Heart right ventricle (tissue), 16 donors: ENCODE measurements at regions of chr21 and their contacts with region 1.

Region 1: DNA sequence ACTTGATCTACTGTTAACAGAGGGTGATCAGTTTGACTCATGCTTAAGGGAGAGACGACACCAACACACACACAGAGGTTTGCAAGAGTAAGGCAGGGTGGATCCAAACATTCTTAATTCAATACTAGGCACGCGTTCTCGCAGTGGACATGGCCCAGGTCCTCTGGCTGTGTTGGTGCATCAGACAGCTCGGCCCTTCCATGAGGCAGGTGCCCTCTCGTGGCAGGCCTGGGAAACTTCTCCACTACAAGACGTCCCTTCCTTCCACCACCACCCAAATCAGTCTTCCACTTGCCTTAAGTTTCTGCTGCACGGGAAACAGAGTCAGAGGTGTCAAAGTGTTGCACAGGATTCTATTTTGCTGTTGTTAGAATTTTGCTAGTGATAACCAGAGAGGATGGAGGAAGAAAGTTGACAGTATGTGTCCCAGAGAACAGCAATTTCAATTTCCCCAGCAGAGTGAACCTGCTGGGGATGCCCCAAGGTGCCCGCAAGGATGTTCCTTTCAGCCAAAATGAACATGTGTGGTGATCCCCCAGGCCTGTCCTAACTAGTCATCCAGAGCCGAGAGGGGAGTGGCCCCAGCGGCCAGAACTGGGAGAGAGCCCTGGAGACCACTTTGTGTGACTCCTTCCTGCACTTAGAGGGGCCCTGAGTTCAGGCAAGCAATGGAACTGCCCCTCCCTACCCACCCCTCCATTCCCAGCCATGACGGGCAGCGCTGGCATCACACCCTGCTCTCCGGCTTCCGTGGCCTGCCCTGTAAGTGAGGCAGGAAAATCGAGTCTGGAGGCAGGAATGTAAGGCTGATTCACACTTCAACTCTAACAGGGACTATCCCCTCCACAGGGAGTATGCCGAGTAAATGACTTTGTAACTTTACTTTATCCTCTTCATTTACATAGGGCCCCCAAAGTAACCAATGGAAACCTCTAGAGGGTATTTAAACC is 34.8 kb downstream of the MX1 start:
- DNase-seq: peak; percentile 71 to 72
- ATAC-seq: peak; percentile 81 to 93 (median 88)
- H3K4me3 ChIP-seq: no peak overlapping the region
- H3K27ac ChIP-seq: no peak overlapping the region
- H3K4me1 ChIP-seq: no peaks in the 10 kb centered on the region
- H3K27me3 ChIP-seq: no peaks in the 10 kb centered on the region
- CTCF ChIP-seq: peak; percentile 62 to 85 (median 80)

Region 2: DNA sequence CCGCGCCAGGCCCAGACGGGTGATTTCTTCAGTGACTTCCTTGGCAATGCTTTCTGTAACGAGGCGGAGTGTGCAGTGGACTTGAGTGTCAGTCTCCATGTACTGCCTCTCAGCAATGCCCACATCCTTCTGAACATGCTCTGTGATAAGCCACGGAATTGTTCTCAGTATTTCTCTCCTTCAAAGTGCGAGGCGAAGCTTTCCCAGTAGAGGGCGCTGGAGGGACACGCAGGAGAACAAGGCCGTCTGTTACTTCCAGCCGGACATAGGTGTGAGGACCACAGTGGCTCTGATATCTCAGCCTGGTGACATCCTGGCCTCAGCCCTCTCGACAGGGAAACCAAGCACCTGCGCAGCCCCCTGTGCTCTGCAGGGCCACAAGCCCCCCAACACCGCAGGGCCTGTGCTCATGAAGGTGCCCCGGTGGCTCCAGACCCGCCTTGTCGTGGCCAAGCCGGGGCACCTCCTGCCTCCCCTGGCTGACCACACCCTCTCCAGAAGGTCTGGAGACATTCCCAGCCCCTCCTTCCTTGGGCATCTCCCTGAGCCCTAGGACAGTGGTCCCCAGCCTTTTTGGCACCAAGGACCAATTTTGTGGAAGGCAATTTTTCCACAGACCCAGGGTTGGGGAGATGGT is 338.9 kb before region 1 on chr21:
- intact Hi-C with region 1: loop called in 9 of 10 experiments (anchors 2 to 10 kb)
- DNase-seq: peak; percentile 73 to 84
- ATAC-seq: peak; percentile 33 to 90 (median 86)
- H3K4me3 ChIP-seq: no peak overlapping the region
- H3K27ac ChIP-seq: no peak overlapping the region
- H3K4me1 ChIP-seq: peaks cover 0 to 11% (median 3%) of the 10 kb centered on the region in 9 donors
- H3K27me3 ChIP-seq: peaks cover 0 to 33% (median 16%) of the 10 kb centered on the region in 7 donors
- CTCF ChIP-seq: peak; percentile 82 to 95 (median 89)

Region 3: DNA sequence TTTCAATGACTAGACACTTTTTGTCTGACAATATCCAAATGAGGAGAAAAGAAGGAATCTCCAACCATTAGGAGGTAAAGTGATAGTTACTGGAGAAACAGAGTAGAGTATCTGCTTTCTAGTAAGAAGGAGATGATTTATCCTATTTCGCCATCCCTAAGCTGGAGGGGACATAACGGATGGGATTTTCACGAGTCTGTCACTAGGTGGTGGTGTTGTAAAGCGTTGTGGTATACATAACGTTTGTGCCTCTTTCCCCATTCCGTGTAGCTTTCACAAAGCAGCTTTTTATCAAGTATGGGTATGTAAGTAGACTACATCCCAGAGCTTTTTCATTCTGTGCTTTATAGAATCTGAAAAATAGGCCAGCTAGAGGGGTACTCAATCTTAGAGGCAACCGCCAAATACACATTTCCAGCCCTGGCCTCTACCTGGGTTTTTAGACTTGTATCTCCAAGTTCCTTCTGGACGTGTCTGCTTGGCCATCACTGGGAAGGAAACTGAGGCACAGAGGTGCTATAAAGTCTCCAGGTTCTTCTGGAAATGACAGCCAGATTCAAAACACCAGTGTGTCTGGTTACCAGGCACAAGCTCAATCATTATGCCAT is 177.5 kb before region 1 on chr21:
- intact Hi-C with region 1: loop called (anchors 1 to 5 kb)
- DNase-seq: peak in 1 of 2 donors; percentile 66
- ATAC-seq: peak; percentile 80 to 92 (median 89)
- H3K4me3 ChIP-seq: no peak overlapping the region
- H3K27ac ChIP-seq: no peak overlapping the region
- H3K4me1 ChIP-seq: peaks cover 0 to 11% (median 0%) of the 10 kb centered on the region in 9 donors
- H3K27me3 ChIP-seq: peaks cover 0 to 14% (median 5%) of the 10 kb centered on the region in 7 donors
- CTCF ChIP-seq: peak; percentile 53 to 85 (median 78)

Region 4: GRCh38 chr21:41403331-41403730 is 57.5 kb before region 1 on chr21:
- intact Hi-C with region 1: loop called in 1 of 10 experiments (anchors 5 kb)
- DNase-seq: no peak
- ATAC-seq: no peak
- H3K4me3 ChIP-seq: no peak overlapping the region
- H3K27ac ChIP-seq: no peak overlapping the region
- H3K4me1 ChIP-seq: no peaks in the 10 kb centered on the region
- H3K27me3 ChIP-seq: no peaks in the 10 kb centered on the region
- CTCF ChIP-seq: no peak